Aorta (tissue), 5 donors: ENCODE measurements at regions of chr21 and their contacts with region 1.

Region 1: GRCh38 chr21:41868062-41868710 is 11.0 kb downstream of the PRDM15 start:
- DNase-seq: peak in 1 of 2 donors; percentile 9
- ATAC-seq: no peak
- H3K4me3 ChIP-seq: no peak overlapping the region
- H3K27ac ChIP-seq: no peak overlapping the region
- H3K4me1 ChIP-seq: no peaks in the 10 kb centered on the region
- H3K27me3 ChIP-seq: no peaks in the 10 kb centered on the region

Region 2: DNA sequence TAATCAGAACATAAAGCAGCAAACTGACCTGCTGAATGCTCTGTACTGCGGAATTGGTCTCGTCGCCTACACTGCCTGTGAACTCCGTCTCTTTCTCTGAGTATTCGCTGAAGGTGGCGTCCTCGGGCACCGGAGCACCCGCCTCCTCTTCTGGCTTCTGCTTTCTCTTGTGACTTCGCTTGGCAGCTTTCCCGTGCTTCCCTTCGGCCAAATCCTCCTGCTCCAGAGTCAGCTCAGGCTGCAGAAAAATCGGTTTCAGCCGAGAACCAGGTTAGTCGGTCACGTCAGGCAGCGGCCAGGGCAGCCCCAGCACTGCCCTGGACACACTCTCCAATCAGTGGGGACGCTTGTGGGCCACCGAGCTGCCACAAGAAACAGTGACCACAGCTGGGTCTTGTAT is 65.5 kb before region 1 on chr21:
- intact Hi-C with region 1: loop called in 1 of 2 experiments (anchors 10 kb)
- DNase-seq: peak; percentile 85 to 88
- ATAC-seq: peak; percentile 58
- H3K4me3 ChIP-seq: no peak overlapping the region
- H3K27ac ChIP-seq: no peak overlapping the region
- H3K4me1 ChIP-seq: no peaks in the 10 kb centered on the region
- H3K27me3 ChIP-seq: no peaks in the 10 kb centered on the region

Region 3: GRCh38 chr21:41973861-41974751 is 105.9 kb after region 1 on chr21:
- intact Hi-C with region 1: no loop called
- DNase-seq: no peak
- ATAC-seq: no peak
- H3K4me3 ChIP-seq: no peak overlapping the region
- H3K27ac ChIP-seq: no peak overlapping the region
- H3K4me1 ChIP-seq: no peaks in the 10 kb centered on the region
- H3K27me3 ChIP-seq: no peaks in the 10 kb centered on the region

Region 4: DNA sequence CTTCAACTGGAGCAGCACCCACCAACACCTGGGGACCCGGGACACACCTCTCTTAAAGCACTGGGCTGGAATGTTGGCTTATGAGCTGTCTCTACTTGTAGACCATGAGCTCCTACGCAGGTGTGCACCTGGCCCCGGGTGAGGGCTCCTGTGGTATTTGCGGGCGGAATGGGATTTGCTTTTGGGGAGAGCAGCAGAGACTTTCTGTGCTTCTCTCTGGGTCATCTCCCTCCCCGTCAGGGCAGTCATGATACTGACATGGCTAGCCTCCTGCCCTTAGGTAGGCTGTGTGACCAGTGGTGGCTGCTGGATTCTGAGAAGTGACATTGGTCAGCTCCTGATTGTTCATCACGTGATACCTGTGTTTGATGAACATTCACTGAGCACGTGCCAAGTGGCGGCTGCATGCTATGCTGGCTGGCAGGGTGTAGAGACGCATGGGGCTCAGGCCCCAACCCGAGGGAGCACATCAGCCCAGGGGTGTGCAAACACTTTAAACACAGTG is 151.0 kb after region 1 on chr21:
- intact Hi-C with region 1: no loop called
- DNase-seq: no peak
- ATAC-seq: no peak
- H3K4me3 ChIP-seq: no peak overlapping the region
- H3K27ac ChIP-seq: no peak overlapping the region
- H3K4me1 ChIP-seq: no peaks in the 10 kb centered on the region
- H3K27me3 ChIP-seq: no peaks in the 10 kb centered on the region